ENCODE measurements at regions of chr4 and their contacts with region 1.

Region 1: GRCh38 chr4:85637778-85638177 is 162.8 kb downstream of the ARHGAP24 start:
- DNase-seq: no peak
- H3K4me3 Mint-ChIP-seq: no peak overlapping the region
- H3K27ac Mint-ChIP-seq: no peak overlapping the region
- H3K4me1 Mint-ChIP-seq: no peaks in the 10 kb centered on the region
- H3K27me3 Mint-ChIP-seq: no peaks in the 10 kb centered on the region
- CTCF ChIP-seq: no peak

Region 2: GRCh38 chr4:85587952-85588351 is 49.8 kb before region 1 on chr4:
- CTCF ChIA-PET with region 1: no interaction called
- POLR2A ChIA-PET with region 1: no interaction called
- intact Hi-C with region 1: loop called (anchors 10 kb)
- DNase-seq: no peak
- H3K4me3 Mint-ChIP-seq: no peak overlapping the region
- H3K27ac Mint-ChIP-seq: no peak overlapping the region
- H3K4me1 Mint-ChIP-seq: no peaks in the 10 kb centered on the region
- H3K27me3 Mint-ChIP-seq: no peaks in the 10 kb centered on the region
- CTCF ChIP-seq: no peak

Measured in MCF 10A (cell line).